A673 (cell line): ENCODE measurements at regions of chr20 and their contacts with region 1.

Region 1: GRCh38 chr20:32742322-32743236 is 688 bp downstream of the COMMD7 start:
- DNase-seq: no peak
- H3K4me3 ChIP-seq: peak overlapping the region; percentile 69
- H3K27ac ChIP-seq: peak overlapping the region; percentile 71
- H3K4me1 ChIP-seq: peaks cover 5% of the 10 kb centered on the region
- H3K27me3 ChIP-seq: no peaks in the 10 kb centered on the region
- CTCF ChIP-seq: no peak

Region 2: DNA sequence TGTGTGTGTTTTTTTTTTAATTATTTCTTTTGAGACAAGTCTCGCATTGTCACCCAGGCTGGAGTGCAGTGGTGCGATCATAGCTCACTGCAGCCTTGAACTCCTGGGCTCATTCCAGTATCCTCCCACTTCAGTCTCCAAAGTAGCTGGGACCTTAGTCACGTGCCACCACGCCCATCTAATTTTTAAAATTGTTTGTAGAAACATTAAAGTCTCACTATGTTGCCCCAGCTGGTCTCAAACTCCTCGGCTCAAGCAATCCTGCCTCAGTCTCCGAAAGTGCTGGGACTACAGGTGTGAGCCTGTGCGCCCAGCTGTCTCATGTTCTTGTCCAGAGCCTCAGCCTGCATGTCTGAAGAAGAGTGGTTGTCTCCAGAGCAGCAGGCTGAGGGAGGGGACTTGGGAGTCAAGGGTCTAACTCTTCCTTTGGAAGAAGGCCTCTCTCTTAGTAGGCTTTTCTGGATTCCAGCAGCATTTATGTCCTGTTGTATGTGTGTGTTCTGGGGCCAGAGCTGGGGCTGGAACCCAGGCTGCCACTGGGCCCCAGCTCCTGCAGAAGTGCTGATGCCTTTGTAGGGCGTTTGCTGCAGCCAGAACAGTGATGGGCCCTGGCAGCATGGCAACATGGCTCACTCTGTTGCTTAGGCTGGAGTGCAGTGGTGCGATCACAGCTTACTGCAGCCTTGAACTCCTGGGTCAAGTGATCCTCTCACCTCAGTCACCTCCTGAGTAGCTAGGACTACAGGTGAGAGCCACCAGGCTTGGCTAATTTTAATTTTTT is 25.0 kb after region 1 on chr20:
- CTCF ChIA-PET with region 1: no interaction called
- POLR2A ChIA-PET with region 1: interaction called, 18 read pairs
- intact Hi-C with region 1: no loop called
- DNase-seq: no peak
- H3K4me3 ChIP-seq: no peak overlapping the region
- H3K27ac ChIP-seq: no peak overlapping the region
- H3K4me1 ChIP-seq: peaks cover 7% of the 10 kb centered on the region
- H3K27me3 ChIP-seq: no peaks in the 10 kb centered on the region
- CTCF ChIP-seq: no peak

Region 3: DNA sequence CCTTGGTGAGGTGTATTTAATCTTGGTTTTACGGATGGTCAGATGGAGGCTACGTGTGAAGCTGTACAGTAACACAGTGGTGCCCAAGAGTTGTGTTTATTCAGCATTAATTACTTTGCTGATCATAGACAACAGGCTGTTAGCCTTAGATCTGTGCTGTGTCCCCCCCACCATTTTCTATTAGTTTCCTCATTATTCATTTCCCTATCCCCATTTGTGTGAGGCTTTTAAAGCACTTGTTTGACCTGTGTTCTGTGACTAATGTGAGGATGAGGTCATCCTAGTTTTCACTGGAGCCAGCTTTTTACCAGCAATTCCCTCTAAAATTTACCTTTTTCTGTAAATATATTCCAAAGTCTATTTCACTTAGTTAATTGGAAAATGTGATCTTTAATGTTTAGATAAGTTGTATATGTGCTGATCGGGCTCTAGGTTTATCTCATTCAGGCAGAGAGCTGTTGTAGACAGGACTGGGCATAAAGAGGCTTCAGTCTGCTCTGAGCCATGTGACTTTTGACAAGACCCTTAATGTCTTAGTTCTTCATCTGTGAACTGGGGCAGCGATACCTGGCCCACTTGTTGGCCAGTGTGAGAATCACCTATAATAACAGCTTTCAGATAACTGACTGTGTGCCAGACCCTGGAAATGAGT is 85.6 kb after region 1 on chr20:
- CTCF ChIA-PET with region 1: no interaction called
- POLR2A ChIA-PET with region 1: interaction called, 11 read pairs
- intact Hi-C with region 1: no loop called
- DNase-seq: no peak
- H3K4me3 ChIP-seq: no peak overlapping the region
- H3K27ac ChIP-seq: no peak overlapping the region
- H3K4me1 ChIP-seq: peaks cover 2% of the 10 kb centered on the region
- H3K27me3 ChIP-seq: no peaks in the 10 kb centered on the region
- CTCF ChIP-seq: no peak